ENCODE measurements at regions of chr12 and their contacts with region 1.

Region 1: GRCh38 chr12:34022079-34022830 is at the start of gene ALG10:
- DNase-seq: peak; percentile 86 to 97 (median 95)
- H3K4me3 ChIP-seq: peak within 1 kb of the TSS; percentile 62 to 94 (median 79)
- H3K27ac ChIP-seq: peak within 1 kb of the TSS; percentile 43 to 97 (median 86)
- H3K27me3 ChIP-seq: no peaks in the 10 kb centered on the region
- CTCF ChIP-seq: peak; percentile 70 to 95 (median 84)
- total RNA-seq, gene ALG10: 4.6 to 13.9 (median 8.1) TPM

Region 2: DNA sequence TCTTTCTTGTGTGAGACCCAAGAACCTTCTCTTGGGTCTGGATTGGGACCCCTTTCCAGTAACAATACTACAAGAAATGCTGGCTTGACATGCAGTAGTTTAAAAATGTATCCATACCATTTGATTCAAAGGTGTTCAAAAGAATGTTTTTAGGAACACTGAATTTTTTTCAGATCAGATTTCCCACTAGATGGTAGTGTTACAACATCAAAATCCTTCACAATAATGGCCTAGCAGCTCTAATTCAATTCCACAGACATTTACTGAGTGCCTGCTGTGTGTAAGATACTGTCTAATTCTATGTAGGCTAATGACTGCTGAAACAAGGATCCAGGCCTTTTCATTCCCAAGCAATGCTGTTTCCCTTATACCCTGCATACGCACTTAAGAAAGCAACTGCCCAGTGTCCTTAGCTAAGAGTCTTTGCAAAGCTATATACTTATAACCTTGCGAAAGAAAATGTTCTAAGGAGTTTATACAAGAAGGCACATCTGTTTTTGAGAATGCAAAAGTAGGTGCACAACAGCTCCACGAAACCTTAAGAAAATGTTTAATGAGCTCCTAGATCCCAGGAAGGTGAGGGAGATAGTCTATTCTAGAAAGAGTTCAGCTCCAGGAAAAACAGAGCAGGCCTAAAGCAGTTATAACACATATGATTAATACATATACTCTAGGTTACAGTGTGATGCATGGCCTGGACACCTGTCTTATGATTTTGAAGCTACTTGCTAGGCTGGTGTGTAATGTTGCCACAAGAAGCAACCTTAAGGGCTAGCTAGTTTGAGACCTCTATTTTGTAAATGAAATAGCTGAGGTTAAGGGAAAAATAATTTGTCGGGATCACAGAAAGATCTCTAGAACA is 1074.8 kb before region 1 on chr12:
- intact Hi-C with region 1: loop called (anchors 5 to 10 kb)
- DNase-seq: no peak
- H3K4me3 ChIP-seq: no peak overlapping the region
- H3K27ac ChIP-seq: peak overlapping the region in 24 of 59 donors; percentile 4 to 62 (median 28)
- H3K27me3 ChIP-seq: peaks cover 0 to 6% (median 0%) of the 10 kb centered on the region in 45 donors
- CTCF ChIP-seq: peak in 52 of 56 donors; percentile 14 to 69 (median 45)

Region 3: GRCh38 chr12:33825986-33826602 is 196.2 kb before region 1 on chr12:
- intact Hi-C with region 1: no loop called
- DNase-seq: no peak
- H3K4me3 ChIP-seq: no peak overlapping the region
- H3K27ac ChIP-seq: no peak overlapping the region
- H3K27me3 ChIP-seq: no peaks in the 10 kb centered on the region
- CTCF ChIP-seq: no peak